ENCODE measurements at regions of chr14 and their contacts with region 1.

Region 1: GRCh38 chr14:106491851-106492250 is 965.5 kb downstream of the TMEM121 start:
- DNase-seq: peak; percentile 63
- ATAC-seq: no peak
- H3K4me3 Mint-ChIP-seq: no peak overlapping the region
- H3K27ac Mint-ChIP-seq: no peak overlapping the region
- H3K4me1 Mint-ChIP-seq: peaks cover 32% of the 10 kb centered on the region
- H3K27me3 Mint-ChIP-seq: no peaks in the 10 kb centered on the region

Region 2: DNA sequence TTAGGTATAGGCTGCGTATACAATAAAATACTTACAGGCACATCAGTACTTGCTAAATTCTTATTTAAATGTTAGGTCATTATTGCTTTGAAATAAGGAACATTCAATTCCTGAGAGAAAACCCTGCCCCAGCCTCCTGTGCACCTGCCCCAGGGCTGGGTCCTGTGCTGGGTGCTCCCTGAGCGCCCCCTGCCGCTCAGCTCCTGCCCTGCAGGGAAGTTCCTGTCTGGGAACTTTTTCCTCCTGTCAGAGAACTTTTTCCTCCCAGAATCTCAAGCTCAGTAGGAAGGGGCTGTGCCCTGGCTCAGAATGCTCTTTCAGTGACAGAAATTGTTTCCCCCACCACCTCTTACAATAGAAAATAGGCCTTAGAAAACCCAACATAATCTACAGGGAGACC is 214.3 kb before region 1 on chr14:
- CTCF ChIA-PET with region 1: no interaction called
- POLR2A ChIA-PET with region 1: no interaction called
- intact Hi-C with region 1: no loop called
- DNase-seq: peak; percentile 66
- ATAC-seq: peak; percentile 51
- H3K4me3 Mint-ChIP-seq: peak overlapping the region; percentile 56
- H3K27ac Mint-ChIP-seq: no peak overlapping the region
- H3K4me1 Mint-ChIP-seq: peaks cover 34% of the 10 kb centered on the region
- H3K27me3 Mint-ChIP-seq: peaks cover 2% of the 10 kb centered on the region

Region 3: DNA sequence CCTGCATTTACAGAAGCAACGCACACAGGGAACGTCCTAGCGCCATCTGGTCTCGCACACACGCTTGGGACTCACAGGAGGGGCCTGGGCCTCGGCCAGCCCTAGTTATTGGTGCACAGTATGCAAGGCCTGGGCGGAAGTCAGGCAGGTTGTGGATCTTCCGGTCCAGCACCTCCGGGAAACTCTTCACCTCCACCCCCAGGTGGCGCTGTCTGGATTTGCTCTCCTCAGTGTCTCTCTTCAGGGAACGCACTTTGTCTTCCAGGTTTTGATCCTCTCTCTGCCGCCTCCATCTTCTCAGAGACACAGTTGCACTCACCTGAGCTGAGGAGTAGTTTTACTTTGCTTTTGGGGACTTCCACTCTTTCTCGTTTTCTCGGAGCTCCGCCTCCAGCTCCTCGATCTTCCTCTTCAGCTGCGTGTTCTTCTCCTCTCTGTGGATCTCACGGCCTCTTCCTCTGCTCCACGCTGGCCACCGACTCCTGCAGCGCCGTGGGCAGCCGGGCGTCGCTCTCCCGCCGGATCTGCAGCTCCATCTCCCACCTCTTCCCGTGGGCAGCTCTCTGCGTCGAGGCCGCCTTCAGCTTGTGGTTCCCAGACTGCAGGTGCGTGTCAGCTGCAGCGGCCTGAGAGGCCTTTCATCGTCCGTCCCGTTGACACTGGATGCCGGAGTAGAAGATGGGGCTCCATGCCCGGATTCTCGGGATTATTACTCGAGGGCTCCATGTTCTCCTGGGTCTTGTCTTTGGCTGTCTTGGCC is 31.7 kb before region 1 on chr14:
- CTCF ChIA-PET with region 1: interaction called, 7 read pairs
- POLR2A ChIA-PET with region 1: no interaction called
- intact Hi-C with region 1: loop called in 1 of 2 experiments (anchors 2 kb)
- DNase-seq: peak; percentile 84
- ATAC-seq: peak; percentile 76
- H3K4me3 Mint-ChIP-seq: no peak overlapping the region
- H3K27ac Mint-ChIP-seq: no peak overlapping the region
- H3K4me1 Mint-ChIP-seq: peaks cover 2% of the 10 kb centered on the region
- H3K27me3 Mint-ChIP-seq: no peaks in the 10 kb centered on the region

Region 4: GRCh38 chr14:106501898-106502297 is 10.0 kb after region 1 on chr14:
- CTCF ChIA-PET with region 1: interaction called, 24 read pairs
- POLR2A ChIA-PET with region 1: interaction called, 3 read pairs
- intact Hi-C with region 1: no loop called
- DNase-seq: no peak
- ATAC-seq: peak; percentile 63
- H3K4me3 Mint-ChIP-seq: no peak overlapping the region
- H3K27ac Mint-ChIP-seq: no peak overlapping the region
- H3K4me1 Mint-ChIP-seq: peaks cover 24% of the 10 kb centered on the region
- H3K27me3 Mint-ChIP-seq: no peaks in the 10 kb centered on the region

Region 5: GRCh38 chr14:106511006-106511799 is 19.4 kb after region 1 on chr14:
- CTCF ChIA-PET with region 1: interaction called, 13 read pairs
- POLR2A ChIA-PET with region 1: interaction called, 3 read pairs
- intact Hi-C with region 1: no loop called
- DNase-seq: peak; percentile 69
- ATAC-seq: peak; percentile 53
- H3K4me3 Mint-ChIP-seq: peak overlapping the region; percentile 15
- H3K27ac Mint-ChIP-seq: peak overlapping the region; percentile 51
- H3K4me1 Mint-ChIP-seq: peaks cover 73% of the 10 kb centered on the region
- H3K27me3 Mint-ChIP-seq: no peaks in the 10 kb centered on the region

Region 6: DNA sequence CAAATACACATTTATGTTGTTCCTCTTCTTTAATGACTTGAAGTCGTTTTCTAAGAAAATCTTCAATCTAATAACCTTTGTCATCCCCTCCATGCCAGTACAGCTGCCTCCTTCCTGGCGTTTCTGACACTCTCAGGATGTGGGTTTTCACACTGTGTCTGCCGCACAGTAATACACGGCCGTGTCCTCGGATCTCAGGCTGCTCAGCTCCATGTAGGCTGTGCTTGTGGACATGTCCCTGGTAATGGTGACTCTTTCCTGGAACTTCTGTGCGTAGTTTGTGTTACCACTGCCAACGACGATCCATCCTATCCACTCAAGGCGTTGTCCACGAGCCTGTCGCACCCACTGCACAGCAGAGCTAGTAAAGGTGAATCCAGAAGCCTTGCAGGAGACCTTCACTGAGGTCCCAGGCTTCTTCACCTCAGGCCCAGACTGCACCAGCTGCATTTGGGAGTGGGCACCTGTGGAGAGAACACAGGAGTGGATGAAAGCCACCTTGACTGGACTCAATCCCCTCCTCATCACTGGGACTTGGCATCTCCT is 130.4 kb after region 1 on chr14:
- CTCF ChIA-PET with region 1: no interaction called
- POLR2A ChIA-PET with region 1: no interaction called
- intact Hi-C with region 1: no loop called
- DNase-seq: peak; percentile 52
- ATAC-seq: peak; percentile 27
- H3K4me3 Mint-ChIP-seq: no peak overlapping the region
- H3K27ac Mint-ChIP-seq: no peak overlapping the region
- H3K4me1 Mint-ChIP-seq: peaks cover 13% of the 10 kb centered on the region
- H3K27me3 Mint-ChIP-seq: peaks cover 24% of the 10 kb centered on the region

Region 7: GRCh38 chr14:106652502-106652901 is 160.7 kb after region 1 on chr14:
- CTCF ChIA-PET with region 1: no interaction called
- POLR2A ChIA-PET with region 1: no interaction called
- intact Hi-C with region 1: no loop called
- DNase-seq: no peak
- ATAC-seq: peak; percentile 16
- H3K4me3 Mint-ChIP-seq: no peak overlapping the region
- H3K27ac Mint-ChIP-seq: no peak overlapping the region
- H3K4me1 Mint-ChIP-seq: peaks cover 4% of the 10 kb centered on the region
- H3K27me3 Mint-ChIP-seq: peaks cover 2% of the 10 kb centered on the region